ENCODE measurements at regions of chr11 and their contacts with region 1.

Region 1: GRCh38 chr11:124669193-124669592 is 4.3 kb downstream of the SIAE start:
- DNase-seq: no peak
- ATAC-seq: no peak

Region 2: GRCh38 chr11:124763156-124763947 is 94.2 kb after region 1 on chr11:
- intact Hi-C with region 1: loop called (anchors 10 kb)
- DNase-seq: peak; percentile 93
- ATAC-seq: peak; percentile 31

Region 3: GRCh38 chr11:124799348-124800225 is 130.4 kb after region 1 on chr11:
- intact Hi-C with region 1: loop called (anchors 10 kb)
- DNase-seq: peak; percentile 49
- ATAC-seq: peak; percentile 33

Region 4: DNA sequence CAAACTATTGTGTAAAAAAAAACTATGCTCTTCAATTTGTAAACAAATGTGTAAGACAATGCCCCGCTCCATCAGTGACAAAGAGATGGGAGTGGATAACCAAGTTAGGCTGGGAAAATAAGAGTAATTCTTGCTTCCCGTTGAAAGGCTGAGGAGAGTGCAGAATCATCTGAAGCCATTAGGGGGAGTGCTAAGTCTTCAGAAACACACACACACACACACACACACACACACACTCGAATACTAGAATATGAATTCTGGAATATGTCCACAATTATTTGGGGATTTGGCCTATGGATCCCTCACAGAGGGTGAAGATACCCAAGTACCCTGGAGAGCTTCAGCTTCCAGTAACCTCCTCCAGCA is 168.3 kb after region 1 on chr11:
- intact Hi-C with region 1: loop called (anchors 10 kb)
- DNase-seq: no peak
- ATAC-seq: peak; percentile 69

Region 5: DNA sequence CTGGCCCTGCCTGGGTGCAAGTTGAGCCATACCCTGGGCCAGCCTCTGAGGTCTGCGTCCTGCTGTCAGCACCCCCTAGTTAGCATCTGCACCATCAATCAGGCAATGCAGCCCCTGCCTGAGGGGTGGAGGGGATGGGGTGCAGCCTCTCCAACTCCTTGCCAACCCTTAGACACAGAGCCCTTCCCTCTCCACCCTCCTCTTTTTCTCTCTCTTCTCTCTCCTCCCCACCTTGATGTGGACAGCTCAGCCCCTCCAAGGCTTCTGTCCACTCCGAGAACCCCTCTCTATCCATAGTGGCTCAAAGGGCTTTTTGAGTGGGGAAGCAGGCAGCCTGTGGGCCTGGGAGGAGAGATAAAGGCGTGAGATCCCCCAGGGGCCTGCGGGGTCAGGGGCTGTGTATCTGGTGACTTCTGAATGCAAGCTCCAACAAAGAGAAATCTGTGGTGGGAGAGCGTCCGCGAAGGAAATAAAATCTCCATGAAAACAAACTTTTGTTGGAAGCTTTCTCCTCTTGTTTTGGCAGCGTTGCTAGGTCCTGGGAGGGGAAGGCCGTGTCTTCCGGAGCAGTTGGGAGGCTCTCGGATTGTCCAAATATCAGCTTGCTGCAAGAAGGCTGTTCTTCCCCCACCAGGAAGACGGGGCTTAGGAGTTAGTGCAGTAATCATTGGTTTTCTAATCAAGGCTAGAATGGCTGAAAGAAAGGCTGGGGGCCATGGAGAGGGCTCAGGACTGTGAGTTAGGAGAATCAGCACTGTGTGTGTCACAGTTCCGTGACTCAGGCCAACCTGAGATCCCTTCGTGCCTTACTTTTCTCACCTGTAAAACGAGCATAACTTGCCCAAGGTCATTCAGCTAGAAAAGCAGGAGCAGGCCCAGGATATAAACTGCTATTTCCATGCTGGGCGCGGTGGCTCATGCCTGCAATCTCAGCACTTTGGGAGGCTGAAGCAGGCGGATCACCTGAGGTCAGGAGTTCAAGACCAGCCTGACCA is 545.7 kb after region 1 on chr11:
- intact Hi-C with region 1: no loop called
- DNase-seq: peak; percentile 58
- ATAC-seq: peak; percentile 83